ENCODE measurements at regions of chr3 and their contacts with region 1.

Region 1: DNA sequence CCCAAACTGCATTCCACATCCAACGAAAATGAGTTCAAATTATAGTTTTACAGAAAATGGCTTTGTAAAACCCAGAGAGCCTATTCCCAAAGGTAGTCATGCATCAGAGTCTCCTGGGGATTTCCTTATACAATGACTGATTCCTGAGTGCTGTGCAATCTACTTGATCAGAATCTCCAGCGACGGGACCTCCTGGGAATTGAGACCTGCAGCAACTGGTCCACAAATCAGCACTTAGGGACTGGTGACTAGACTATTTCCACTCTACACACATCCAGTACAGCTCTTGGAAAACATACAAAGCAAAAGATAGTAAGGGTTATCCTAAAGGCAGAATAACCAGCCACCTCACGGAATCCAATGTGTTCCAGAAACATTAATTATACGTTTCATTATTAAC is 871.0 kb upstream of the CFAP20DC start:
- DNase-seq: no peak
- ATAC-seq: no peak
- H3K4me3 ChIP-seq: no peak overlapping the region
- H3K4me3 Mint-ChIP-seq: peak overlapping the region in 4 of 10 donors; percentile 19 to 33 (median 25)
- H3K27ac ChIP-seq: no peak overlapping the region
- H3K27ac Mint-ChIP-seq: peak overlapping the region in 8 of 9 donors; percentile 7 to 84 (median 56)
- H3K4me1 ChIP-seq: peaks cover 0 to 51% of the 10 kb centered on the region in 2 donors
- H3K4me1 Mint-ChIP-seq: peaks cover 44 to 98% (median 91%) of the 10 kb centered on the region in 7 donors
- H3K27me3 ChIP-seq: no peaks in the 10 kb centered on the region
- H3K27me3 Mint-ChIP-seq: no peaks in the 10 kb centered on the region

Region 2: GRCh38 chr3:59935025-59935424 is 14.2 kb after region 1 on chr3:
- CTCF ChIA-PET with region 1: interaction called, 4 read pairs
- POLR2A ChIA-PET with region 1: interaction called, 6 read pairs
- intact Hi-C with region 1: loop called (anchors 2 kb)
- DNase-seq: peak in 1 of 9 donors; percentile 24
- ATAC-seq: no peak
- H3K4me3 ChIP-seq: no peak overlapping the region
- H3K4me3 Mint-ChIP-seq: peak overlapping the region; percentile 0 to 52 (median 36)
- H3K27ac ChIP-seq: no peak overlapping the region
- H3K27ac Mint-ChIP-seq: peak overlapping the region; percentile 69 to 91 (median 80)
- H3K4me1 ChIP-seq: peaks cover 5 to 74% of the 10 kb centered on the region in 2 donors
- H3K4me1 Mint-ChIP-seq: peaks cover 27 to 100% (median 96%) of the 10 kb centered on the region in 7 donors
- H3K27me3 ChIP-seq: no peaks in the 10 kb centered on the region
- H3K27me3 Mint-ChIP-seq: no peaks in the 10 kb centered on the region

Measured in naive thymus-derived CD4-positive, alpha-beta T cell (primary cell).